ENCODE measurements at regions of chr17 and their contacts with region 1.

Region 1: GRCh38 chr17:35540589-35541404 is 3.3 kb upstream of the SLFN12L start:
- DNase-seq: peak; percentile 62
- ATAC-seq: no peak
- H3K4me3 Mint-ChIP-seq: peak overlapping the region; percentile 78
- H3K27ac Mint-ChIP-seq: peak overlapping the region; percentile 100
- H3K4me1 Mint-ChIP-seq: peaks cover 48% of the 10 kb centered on the region
- H3K27me3 Mint-ChIP-seq: no peaks in the 10 kb centered on the region

Region 2: DNA sequence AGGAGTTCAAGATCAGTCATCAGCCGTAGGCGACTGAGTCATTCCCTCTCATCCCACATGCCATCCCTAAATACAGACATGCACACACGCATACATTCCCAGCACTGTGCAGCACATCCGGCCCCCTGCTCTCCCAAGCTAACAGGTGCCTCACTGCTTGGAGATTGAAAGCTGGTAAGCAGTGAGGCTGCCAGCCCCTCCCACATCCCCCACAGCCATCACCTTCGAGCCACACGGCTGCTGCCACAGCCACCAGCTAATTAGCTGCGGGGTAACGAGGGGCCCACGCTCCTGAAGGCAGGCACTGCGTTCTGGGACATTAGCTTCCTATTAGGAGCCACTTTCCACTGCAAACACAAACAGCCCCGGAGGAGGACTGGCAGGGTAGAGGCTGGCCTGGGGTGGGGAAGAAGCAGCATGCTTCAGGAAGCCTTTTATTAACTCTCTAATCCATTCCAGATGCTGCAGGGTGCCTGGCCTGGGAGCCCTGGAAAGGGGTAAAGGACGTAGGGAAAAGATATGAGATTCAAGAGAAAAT is 759.2 kb before region 1 on chr17:
- CTCF ChIA-PET with region 1: no interaction called
- POLR2A ChIA-PET with region 1: no interaction called
- intact Hi-C with region 1: no loop called
- DNase-seq: no peak
- ATAC-seq: no peak
- H3K4me3 Mint-ChIP-seq: no peak overlapping the region
- H3K27ac Mint-ChIP-seq: no peak overlapping the region
- H3K4me1 Mint-ChIP-seq: no peaks in the 10 kb centered on the region
- H3K27me3 Mint-ChIP-seq: no peaks in the 10 kb centered on the region

Region 3: DNA sequence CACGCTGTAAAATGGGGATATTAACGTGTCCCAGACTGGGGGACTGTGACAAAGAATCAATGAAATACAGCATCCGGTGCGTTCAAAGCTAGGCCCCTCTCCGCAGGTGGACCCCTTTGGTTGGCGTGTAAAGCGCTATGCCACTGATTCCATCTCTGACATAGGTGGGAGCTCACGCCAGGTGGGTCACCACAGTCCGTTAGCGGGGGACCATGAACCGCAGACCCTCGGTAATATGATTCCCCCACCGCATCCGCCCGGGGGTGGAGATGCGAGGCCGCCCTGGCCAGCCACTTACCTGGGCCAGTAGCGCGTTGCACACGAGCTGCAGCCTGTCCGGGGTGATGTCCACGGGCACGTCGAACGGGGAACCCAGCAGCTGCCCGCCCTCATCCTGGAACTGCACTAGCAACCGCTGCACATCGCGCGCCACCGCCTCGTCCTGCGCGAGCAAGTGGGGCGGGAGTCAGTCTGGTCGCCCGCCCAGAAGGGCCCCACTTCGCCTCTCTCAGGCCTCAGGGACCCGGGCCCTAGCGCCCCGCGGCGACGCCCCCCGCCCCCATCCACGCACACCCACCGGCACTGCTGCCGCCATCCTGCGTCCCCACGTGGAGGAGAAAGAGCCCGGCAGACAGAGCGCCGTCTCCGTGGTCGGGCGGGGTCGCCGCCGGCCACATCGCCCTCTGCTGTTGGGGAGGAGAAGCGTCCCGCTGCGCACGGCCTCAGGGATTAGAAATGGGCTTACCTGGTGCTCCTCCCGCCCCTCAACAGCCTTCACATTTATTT is 398.9 kb before region 1 on chr17 and contains the start of gene NLE1:
- CTCF ChIA-PET with region 1: interaction called, 3 read pairs
- POLR2A ChIA-PET with region 1: no interaction called
- intact Hi-C with region 1: loop called in 1 of 2 experiments (anchors 1 kb)
- DNase-seq: peak; percentile 94
- ATAC-seq: peak; percentile 93
- H3K4me3 Mint-ChIP-seq: peak within 1 kb of the TSS; percentile 80
- H3K27ac Mint-ChIP-seq: peak within 1 kb of the TSS; percentile 81
- H3K4me1 Mint-ChIP-seq: peaks cover 14% of the 10 kb centered on the region
- H3K27me3 Mint-ChIP-seq: no peaks in the 10 kb centered on the region
- total RNA-seq, gene NLE1: 38.1 to 40.6 TPM

Region 4: GRCh38 chr17:35312790-35313711 is 227.7 kb before region 1 on chr17:
- CTCF ChIA-PET with region 1: interaction called, 108 read pairs
- POLR2A ChIA-PET with region 1: no interaction called
- intact Hi-C with region 1: loop called (anchors 1 kb)
- DNase-seq: peak; percentile 77
- ATAC-seq: peak; percentile 86
- H3K4me3 Mint-ChIP-seq: peak overlapping the region; percentile 73
- H3K27ac Mint-ChIP-seq: peak overlapping the region; percentile 86
- H3K4me1 Mint-ChIP-seq: peaks cover 28% of the 10 kb centered on the region
- H3K27me3 Mint-ChIP-seq: no peaks in the 10 kb centered on the region

Region 5: GRCh38 chr17:35448214-35448898 is 92.4 kb before region 1 on chr17 and contains the start of gene SLFN13:
- CTCF ChIA-PET with region 1: interaction called, 4 read pairs
- POLR2A ChIA-PET with region 1: no interaction called
- intact Hi-C with region 1: loop called (anchors 1 to 2 kb)
- DNase-seq: peak; percentile 97
- ATAC-seq: peak; percentile 97
- H3K4me3 Mint-ChIP-seq: peak within 1 kb of the TSS; percentile 46
- H3K27ac Mint-ChIP-seq: peak within 1 kb of the TSS; percentile 51
- H3K4me1 Mint-ChIP-seq: peaks cover 15% of the 10 kb centered on the region
- H3K27me3 Mint-ChIP-seq: no peaks in the 10 kb centered on the region
- total RNA-seq, gene SLFN13: 18.6 to 22.5 TPM

Region 6: GRCh38 chr17:35578197-35578928 is 37.6 kb after region 1 on chr17 and contains the start of gene PEX12:
- CTCF ChIA-PET with region 1: interaction called, 4 read pairs
- POLR2A ChIA-PET with region 1: interaction called, 3 read pairs
- intact Hi-C with region 1: loop called in 1 of 2 experiments (anchors 2 kb)
- DNase-seq: peak; percentile 92
- ATAC-seq: peak; percentile 93
- H3K4me3 Mint-ChIP-seq: peak within 1 kb of the TSS; percentile 96
- H3K27ac Mint-ChIP-seq: peak within 1 kb of the TSS; percentile 98
- H3K4me1 Mint-ChIP-seq: peaks cover 23% of the 10 kb centered on the region
- H3K27me3 Mint-ChIP-seq: no peaks in the 10 kb centered on the region
- total RNA-seq, gene PEX12: 5.7 to 6.1 TPM